ENCODE measurements at regions of chr1 and their contacts with region 1.

Region 1: GRCh38 chr1:20493839-20494608 is 8.0 kb upstream of the CAMK2N1 start:
- DNase-seq: peak; percentile 64 to 88 (median 76)
- ATAC-seq: peak; percentile 94
- H3K4me3 ChIP-seq: peak overlapping the region; percentile 29
- H3K4me3 Mint-ChIP-seq: no peak overlapping the region
- H3K27ac ChIP-seq: no peak overlapping the region
- H3K27ac Mint-ChIP-seq: no peak overlapping the region
- H3K4me1 ChIP-seq: no peaks in the 10 kb centered on the region
- H3K4me1 Mint-ChIP-seq: peaks cover 0 to 10% (median 0%) of the 10 kb centered on the region in 7 donors
- H3K27me3 ChIP-seq: no peaks in the 10 kb centered on the region
- H3K27me3 Mint-ChIP-seq: peaks cover 0 to 26% (median 0%) of the 10 kb centered on the region in 5 donors

Region 2: DNA sequence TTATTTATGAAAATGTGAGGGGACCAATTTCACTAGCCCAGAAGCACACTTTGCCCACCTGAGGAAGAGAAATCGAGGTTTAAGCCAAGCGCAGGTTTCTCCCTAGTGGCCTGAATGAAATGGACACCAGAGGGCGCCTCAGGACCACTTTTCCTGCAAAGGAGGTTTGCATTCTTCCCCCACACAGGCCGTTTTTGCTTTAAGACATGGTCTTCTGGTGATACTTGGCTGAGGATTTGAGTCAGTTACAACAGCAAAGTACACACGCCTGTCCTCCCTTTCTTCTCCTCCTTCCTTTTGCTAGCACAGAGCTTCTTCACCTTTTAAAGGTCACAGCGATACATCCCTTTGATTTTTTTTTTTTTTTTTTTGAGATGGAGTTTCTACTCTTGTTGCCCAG is 576.0 kb before region 1 on chr1:
- CTCF ChIA-PET with region 1: interaction called, 3 read pairs
- POLR2A ChIA-PET with region 1: no interaction called
- intact Hi-C with region 1: loop called (anchors 1 to 5 kb)
- DNase-seq: peak; percentile 49 to 81 (median 73)
- ATAC-seq: peak; percentile 75
- H3K4me3 ChIP-seq: no peak overlapping the region
- H3K4me3 Mint-ChIP-seq: peak overlapping the region in 1 of 10 donors; percentile 42
- H3K27ac ChIP-seq: no peak overlapping the region
- H3K27ac Mint-ChIP-seq: no peak overlapping the region
- H3K4me1 ChIP-seq: no peaks in the 10 kb centered on the region
- H3K4me1 Mint-ChIP-seq: peaks cover 0 to 5% (median 0%) of the 10 kb centered on the region in 7 donors
- H3K27me3 ChIP-seq: no peaks in the 10 kb centered on the region
- H3K27me3 Mint-ChIP-seq: peaks cover 0 to 6% (median 0%) of the 10 kb centered on the region in 5 donors

Region 3: GRCh38 chr1:20207419-20207959 is 286.5 kb before region 1 on chr1:
- CTCF ChIA-PET with region 1: interaction called, 15 read pairs
- POLR2A ChIA-PET with region 1: no interaction called
- intact Hi-C with region 1: no loop called
- DNase-seq: no peak
- ATAC-seq: no peak
- H3K4me3 ChIP-seq: no peak overlapping the region
- H3K4me3 Mint-ChIP-seq: no peak overlapping the region
- H3K27ac ChIP-seq: no peak overlapping the region
- H3K27ac Mint-ChIP-seq: no peak overlapping the region
- H3K4me1 ChIP-seq: no peaks in the 10 kb centered on the region
- H3K4me1 Mint-ChIP-seq: peaks cover 0 to 3% (median 0%) of the 10 kb centered on the region in 7 donors
- H3K27me3 ChIP-seq: no peaks in the 10 kb centered on the region
- H3K27me3 Mint-ChIP-seq: peaks cover 6 to 23% (median 21%) of the 10 kb centered on the region in 5 donors

Region 4: DNA sequence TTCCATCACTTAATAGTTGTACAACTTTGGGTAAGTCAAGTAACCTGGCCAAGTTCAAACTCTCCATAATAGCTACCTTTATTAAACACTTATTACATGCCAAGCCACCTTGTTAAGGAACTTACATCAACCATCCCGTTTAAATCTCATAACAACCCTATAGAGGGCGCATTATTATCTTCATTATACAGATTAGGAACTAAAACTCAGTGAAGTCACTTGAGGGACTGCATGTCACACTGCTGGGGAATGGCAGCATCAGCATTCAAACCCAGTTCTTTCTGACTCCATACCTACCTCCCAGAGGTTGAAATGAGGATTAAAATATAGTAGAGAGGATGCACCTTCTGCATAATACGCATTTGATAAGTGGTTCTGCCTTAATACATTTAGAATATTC is 260.6 kb before region 1 on chr1:
- CTCF ChIA-PET with region 1: interaction called, 14 read pairs
- POLR2A ChIA-PET with region 1: no interaction called
- intact Hi-C with region 1: loop called in 1 of 2 experiments (anchors 1 kb)
- DNase-seq: peak in 5 of 9 donors; percentile 20 to 40 (median 30)
- ATAC-seq: peak; percentile 61
- H3K4me3 ChIP-seq: no peak overlapping the region
- H3K4me3 Mint-ChIP-seq: no peak overlapping the region
- H3K27ac ChIP-seq: no peak overlapping the region
- H3K27ac Mint-ChIP-seq: no peak overlapping the region
- H3K4me1 ChIP-seq: no peaks in the 10 kb centered on the region
- H3K4me1 Mint-ChIP-seq: peaks cover 0 to 6% (median 0%) of the 10 kb centered on the region in 7 donors
- H3K27me3 ChIP-seq: no peaks in the 10 kb centered on the region
- H3K27me3 Mint-ChIP-seq: peaks cover 18 to 72% (median 37%) of the 10 kb centered on the region in 5 donors

Region 5: DNA sequence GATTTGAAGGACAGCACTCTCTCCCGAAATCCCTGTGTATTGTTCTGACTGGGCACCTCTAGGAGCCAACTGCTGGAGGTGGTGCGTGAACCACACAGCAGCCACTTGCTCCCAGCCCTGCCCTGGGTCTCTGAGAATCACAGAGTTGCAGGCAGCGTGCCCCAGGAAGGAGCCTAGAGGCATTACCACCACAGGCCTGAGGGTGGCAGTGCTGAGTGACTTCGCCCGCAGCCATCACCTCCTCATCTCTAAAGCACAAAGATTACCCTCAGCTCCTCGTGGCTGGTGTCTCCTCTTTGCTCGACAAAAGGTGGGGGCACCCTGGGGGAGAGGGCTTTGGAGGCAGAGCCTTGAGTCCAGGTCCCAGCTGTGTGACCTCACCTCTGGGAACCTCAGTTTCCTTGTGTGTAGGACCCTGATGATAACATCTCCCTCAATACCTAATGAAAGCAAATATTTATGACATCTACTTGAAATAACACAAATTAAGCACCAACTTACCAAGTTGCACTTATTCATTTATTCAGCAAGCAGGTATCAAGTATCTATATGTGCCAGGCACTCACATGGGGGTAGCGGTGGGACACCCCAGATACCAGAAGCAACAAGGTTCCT is 117.0 kb before region 1 on chr1:
- CTCF ChIA-PET with region 1: interaction called, 3 read pairs
- POLR2A ChIA-PET with region 1: no interaction called
- intact Hi-C with region 1: loop called in 1 of 2 experiments (anchors 1 kb)
- DNase-seq: peak in 7 of 9 donors; percentile 14 to 65 (median 36)
- ATAC-seq: peak; percentile 81
- H3K4me3 ChIP-seq: no peak overlapping the region
- H3K4me3 Mint-ChIP-seq: no peak overlapping the region
- H3K27ac ChIP-seq: no peak overlapping the region
- H3K27ac Mint-ChIP-seq: no peak overlapping the region
- H3K4me1 ChIP-seq: no peaks in the 10 kb centered on the region
- H3K4me1 Mint-ChIP-seq: peaks cover 0 to 5% (median 0%) of the 10 kb centered on the region in 7 donors
- H3K27me3 ChIP-seq: no peaks in the 10 kb centered on the region
- H3K27me3 Mint-ChIP-seq: peaks cover 15 to 42% (median 33%) of the 10 kb centered on the region in 5 donors